ENCODE measurements at regions of chr1 and their contacts with region 1.

Region 1: GRCh38 chr1:40143891-40144575 is 17.2 kb upstream of the RLF start:
- DNase-seq: peak; percentile 91
- ATAC-seq: peak; percentile 92
- H3K4me3 ChIP-seq: no peak overlapping the region
- H3K27ac ChIP-seq: no peak overlapping the region
- H3K4me1 ChIP-seq: peaks cover 31% of the 10 kb centered on the region
- H3K27me3 ChIP-seq: no peaks in the 10 kb centered on the region
- CTCF ChIP-seq: peak; percentile 88

Region 2: DNA sequence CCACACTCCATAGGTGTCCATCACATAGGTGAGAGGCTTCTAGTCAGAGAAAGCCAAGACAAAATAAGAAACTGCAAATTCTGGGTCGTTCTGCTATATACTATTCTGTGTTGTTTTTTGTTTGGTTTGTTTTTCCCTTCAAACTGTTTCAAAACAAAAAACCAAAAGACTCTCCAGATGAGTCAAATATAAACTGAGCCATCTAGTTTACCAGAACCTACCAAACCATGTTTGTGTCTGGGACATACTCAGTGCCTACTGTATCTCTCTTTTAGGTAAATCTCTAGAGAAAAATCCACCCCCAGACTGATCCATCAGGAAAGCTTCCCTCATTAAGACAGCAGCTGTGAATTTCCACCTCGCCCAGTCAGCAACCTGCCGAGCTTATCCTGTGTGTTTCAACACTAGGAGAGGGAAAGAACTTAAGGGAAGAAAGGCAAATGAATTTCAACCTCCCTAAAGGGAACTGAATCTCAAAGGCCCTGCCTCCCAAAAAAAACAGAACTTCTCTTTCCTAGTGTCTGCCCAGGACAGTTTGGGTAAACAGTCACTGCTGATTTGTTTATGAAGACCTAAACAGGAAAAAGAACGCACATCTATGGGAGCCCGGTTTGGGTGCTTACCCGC is 64.1 kb before region 1 on chr1:
- CTCF ChIA-PET with region 1: interaction called, 3 read pairs
- POLR2A ChIA-PET with region 1: no interaction called
- intact Hi-C with region 1: loop called (anchors 1 kb)
- DNase-seq: no peak
- ATAC-seq: no peak
- H3K4me3 ChIP-seq: no peak overlapping the region
- H3K27ac ChIP-seq: no peak overlapping the region
- H3K4me1 ChIP-seq: peaks cover 15% of the 10 kb centered on the region
- H3K27me3 ChIP-seq: no peaks in the 10 kb centered on the region
- CTCF ChIP-seq: no peak

Region 3: GRCh38 chr1:40096977-40097782 is 46.9 kb before region 1 on chr1 and contains the start of gene PPT1:
- CTCF ChIA-PET with region 1: no interaction called
- POLR2A ChIA-PET with region 1: no interaction called
- intact Hi-C with region 1: no loop called
- DNase-seq: peak; percentile 84
- ATAC-seq: peak; percentile 95
- H3K4me3 ChIP-seq: peak within 1 kb of the TSS; percentile 85
- H3K27ac ChIP-seq: peak within 1 kb of the TSS; percentile 13; the same call in 1 of the 2 replicates
- H3K4me1 ChIP-seq: peaks cover 26% of the 10 kb centered on the region
- H3K27me3 ChIP-seq: no peaks in the 10 kb centered on the region
- CTCF ChIP-seq: no peak
- total RNA-seq, gene PPT1: 63.9 and 72.9 TPM in 2 replicates

Region 4: DNA sequence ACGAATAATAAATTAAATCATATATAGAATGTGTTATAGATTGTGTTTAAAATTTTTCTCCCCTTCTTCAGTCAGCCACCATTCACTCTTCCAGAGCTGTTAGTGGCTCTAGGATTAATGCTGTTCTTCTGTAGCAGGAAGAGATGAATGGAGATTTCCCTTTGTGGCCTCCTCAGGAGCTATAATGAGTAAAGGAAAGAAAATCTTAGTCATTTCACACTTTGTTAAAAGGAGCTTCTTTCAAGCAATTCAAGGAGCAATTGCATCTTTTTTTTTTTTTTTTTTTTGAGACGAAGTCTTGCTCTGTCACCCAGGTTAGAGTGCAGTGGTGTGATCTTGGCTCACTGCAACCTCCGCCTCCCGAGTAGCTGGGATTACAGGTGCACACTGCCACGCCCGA is 80.0 kb after region 1 on chr1:
- CTCF ChIA-PET with region 1: interaction called, 12 read pairs
- POLR2A ChIA-PET with region 1: no interaction called
- intact Hi-C with region 1: no loop called
- DNase-seq: no peak
- ATAC-seq: no peak
- H3K4me3 ChIP-seq: no peak overlapping the region
- H3K27ac ChIP-seq: no peak overlapping the region
- H3K4me1 ChIP-seq: no peaks in the 10 kb centered on the region
- H3K27me3 ChIP-seq: no peaks in the 10 kb centered on the region
- CTCF ChIP-seq: no peak

Region 5: GRCh38 chr1:40338745-40339424 is 194.9 kb after region 1 on chr1:
- CTCF ChIA-PET with region 1: interaction called, 34 read pairs
- POLR2A ChIA-PET with region 1: no interaction called
- intact Hi-C with region 1: loop called (anchors 1 kb)
- DNase-seq: peak; percentile 94
- ATAC-seq: peak; percentile 92
- H3K4me3 ChIP-seq: peak overlapping the region; percentile 53; the same call in 1 of the 2 replicates
- H3K27ac ChIP-seq: no peak overlapping the region
- H3K4me1 ChIP-seq: peaks cover 9% of the 10 kb centered on the region; the same call in 1 of the 2 replicates
- H3K27me3 ChIP-seq: no peaks in the 10 kb centered on the region
- CTCF ChIP-seq: peak; percentile 98

Region 6: DNA sequence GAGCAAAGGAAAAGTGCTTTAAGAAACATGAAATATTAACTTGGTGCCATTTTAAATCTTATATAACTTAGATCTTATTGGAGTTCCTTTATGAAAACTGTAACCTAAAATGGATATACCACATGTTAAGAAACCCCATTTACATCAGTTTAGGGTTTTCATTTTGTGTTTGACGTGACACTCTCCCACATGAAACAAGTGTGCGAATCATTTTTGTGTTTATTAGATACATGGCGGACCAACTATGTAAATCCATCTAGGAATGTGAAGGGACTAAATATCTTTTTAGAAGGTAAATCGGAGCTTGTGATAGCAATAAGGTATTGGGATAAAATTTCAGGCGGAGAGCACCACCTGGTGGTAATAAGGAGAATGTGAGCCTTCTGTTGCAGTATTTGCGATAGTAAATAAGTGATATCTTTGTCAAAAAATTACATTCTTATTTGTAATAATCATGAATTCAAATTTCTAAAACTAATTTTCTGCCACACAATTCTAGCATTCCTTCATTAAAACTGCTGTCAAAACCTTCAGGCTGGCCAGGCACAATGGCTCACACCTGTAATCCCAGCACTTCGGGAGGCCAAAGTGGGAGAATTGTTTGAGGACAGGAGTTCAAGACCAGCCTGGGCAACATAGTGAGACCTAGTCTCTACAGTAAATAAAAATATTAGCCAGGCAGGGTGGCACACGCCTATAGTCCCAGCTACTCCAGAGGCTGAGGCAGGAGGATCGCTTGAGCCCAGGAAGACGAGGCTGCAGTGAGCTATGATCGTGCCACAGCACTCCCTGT is 260.8 kb after region 1 on chr1:
- CTCF ChIA-PET with region 1: interaction called, 11 read pairs
- POLR2A ChIA-PET with region 1: no interaction called
- intact Hi-C with region 1: loop called (anchors 1 kb)
- DNase-seq: peak; percentile 76
- ATAC-seq: peak; percentile 80
- H3K4me3 ChIP-seq: no peak overlapping the region
- H3K27ac ChIP-seq: peak overlapping the region; percentile 5; the same call in 1 of the 2 replicates
- H3K4me1 ChIP-seq: peaks cover 6% of the 10 kb centered on the region; the same call in 1 of the 2 replicates
- H3K27me3 ChIP-seq: no peaks in the 10 kb centered on the region
- CTCF ChIP-seq: peak; percentile 85

Measured in PC-3 (cell line).